HEK293 (cell line): ENCODE measurements at regions of chr12 and their contacts with region 1.

Region 1: DNA sequence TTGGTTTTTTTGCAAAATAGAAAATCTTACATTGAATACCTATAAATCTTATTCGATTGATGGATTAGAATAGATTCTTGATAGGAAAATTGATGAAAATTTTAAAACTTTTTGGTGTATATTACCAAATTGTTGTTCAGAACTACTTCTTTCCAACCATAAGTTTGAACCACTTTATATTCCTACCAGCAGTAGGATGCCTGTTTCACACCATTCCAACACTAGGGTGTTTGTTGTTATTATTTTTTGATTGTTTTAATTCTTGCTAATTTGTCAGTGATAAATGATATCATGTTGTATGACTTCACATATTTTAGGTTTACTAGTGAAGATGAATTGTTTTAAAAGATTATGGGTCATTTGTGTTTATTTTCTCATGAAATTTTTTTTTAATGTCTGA is 43.4 kb downstream of the UTP20 start:
- H3K4me3 ChIP-seq: no peak overlapping the region
- H3K27ac ChIP-seq: no peak overlapping the region
- H3K4me1 ChIP-seq: no peaks in the 10 kb centered on the region
- CTCF ChIP-seq: no peak

Region 2: GRCh38 chr12:101172316-101172715 is 150.9 kb before region 1 on chr12:
- CTCF ChIA-PET with region 1: interaction called, 12 read pairs
- POLR2A ChIA-PET with region 1: no interaction called
- H3K4me3 ChIP-seq: no peak overlapping the region
- H3K27ac ChIP-seq: no peak overlapping the region
- H3K4me1 ChIP-seq: no peaks in the 10 kb centered on the region
- CTCF ChIP-seq: peak; percentile 31; the same call in 1 of the 2 replicates